Activated T-helper 1 cell treated with anti-CD3 and anti-CD28 coated beads, Interleukin-12 subunit alpha, Interleukin-12 subunit beta, Interleukin-2, Interleukin-4 antibody, amounts not matched to agents 30 ng/mL and 10 ng/mL and 1 ng/mL, durations not matched to agents 14 hours and 24 hours and 36 hours (primary cell): ENCODE measurements at regions of chr13 and their contacts with region 1.

Region 1: GRCh38 chr13:73715114-73715910 is 418.9 kb downstream of the KLF12 start:
- DNase-seq: peak; percentile 61
- H3K4me3 Mint-ChIP-seq: peak overlapping the region; percentile 55
- H3K27ac Mint-ChIP-seq: peak overlapping the region; percentile 81
- H3K4me1 Mint-ChIP-seq: peaks cover 47% of the 10 kb centered on the region
- H3K27me3 Mint-ChIP-seq: no peaks in the 10 kb centered on the region

Region 2: GRCh38 chr13:72781451-72782439 is 933.6 kb before region 1 on chr13 and contains the starts of genes DIS3 and PIBF1:
- intact Hi-C with region 1: loop called (anchors 2 kb)
- DNase-seq: peak; percentile 97
- H3K4me3 Mint-ChIP-seq: peak within 1 kb of the TSS; percentile 100
- H3K27ac Mint-ChIP-seq: peak within 1 kb of the TSS; percentile 100
- H3K4me1 Mint-ChIP-seq: peaks cover 65% of the 10 kb centered on the region
- H3K27me3 Mint-ChIP-seq: no peaks in the 10 kb centered on the region
- total RNA-seq, gene DIS3: 49.9 and 55.4 TPM in 2 replicates
- total RNA-seq, gene PIBF1: 20.9 and 21.2 TPM in 2 replicates

Region 3: GRCh38 chr13:73521290-73521624 is 194.1 kb before region 1 on chr13:
- intact Hi-C with region 1: loop called (anchors 2 kb)
- DNase-seq: peak; percentile 15
- H3K4me3 Mint-ChIP-seq: peak overlapping the region; percentile 65
- H3K27ac Mint-ChIP-seq: peak overlapping the region; percentile 71
- H3K4me1 Mint-ChIP-seq: peaks cover 22% of the 10 kb centered on the region
- H3K27me3 Mint-ChIP-seq: no peaks in the 10 kb centered on the region

Region 4: DNA sequence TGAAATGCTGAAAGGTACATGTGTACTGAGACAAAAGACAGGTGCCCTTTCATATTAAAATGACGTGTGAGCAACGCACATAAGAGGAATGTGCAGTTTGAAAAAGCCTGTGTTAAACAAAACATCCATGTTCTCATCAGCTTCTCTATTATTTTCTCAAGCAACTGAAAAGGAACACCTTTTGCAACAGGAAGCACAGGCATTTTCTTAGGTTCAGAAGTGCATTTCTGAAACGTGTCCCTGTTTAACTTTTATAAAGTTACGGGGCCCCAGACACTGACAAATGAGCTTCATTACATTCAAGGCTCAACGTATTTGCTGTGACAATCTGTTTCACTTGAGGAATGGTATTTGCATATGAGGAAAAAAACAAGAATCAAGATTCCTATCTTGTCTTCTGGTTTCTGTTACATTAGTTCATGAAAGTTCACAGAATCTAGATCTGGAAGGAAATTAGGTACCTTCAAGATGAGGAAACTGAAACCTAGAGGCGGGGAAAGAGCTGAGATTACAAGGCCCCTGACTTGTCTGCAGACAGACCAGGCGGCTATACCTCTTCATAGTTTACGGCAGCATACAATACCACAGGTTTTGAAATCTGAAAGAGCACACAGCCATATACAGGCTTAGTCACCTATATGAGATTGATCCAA is 12.8 kb before region 1 on chr13:
- intact Hi-C with region 1: loop called (anchors 1 kb)
- DNase-seq: peak; percentile 21
- H3K4me3 Mint-ChIP-seq: peak overlapping the region; percentile 50
- H3K27ac Mint-ChIP-seq: peak overlapping the region; percentile 65
- H3K4me1 Mint-ChIP-seq: peaks cover 27% of the 10 kb centered on the region
- H3K27me3 Mint-ChIP-seq: no peaks in the 10 kb centered on the region

Region 5: GRCh38 chr13:73924607-73925006 is 209.3 kb after region 1 on chr13:
- intact Hi-C with region 1: loop called (anchors 10 kb)
- DNase-seq: no peak
- H3K4me3 Mint-ChIP-seq: no peak overlapping the region
- H3K27ac Mint-ChIP-seq: no peak overlapping the region
- H3K4me1 Mint-ChIP-seq: peaks cover 25% of the 10 kb centered on the region
- H3K27me3 Mint-ChIP-seq: no peaks in the 10 kb centered on the region

Region 6: DNA sequence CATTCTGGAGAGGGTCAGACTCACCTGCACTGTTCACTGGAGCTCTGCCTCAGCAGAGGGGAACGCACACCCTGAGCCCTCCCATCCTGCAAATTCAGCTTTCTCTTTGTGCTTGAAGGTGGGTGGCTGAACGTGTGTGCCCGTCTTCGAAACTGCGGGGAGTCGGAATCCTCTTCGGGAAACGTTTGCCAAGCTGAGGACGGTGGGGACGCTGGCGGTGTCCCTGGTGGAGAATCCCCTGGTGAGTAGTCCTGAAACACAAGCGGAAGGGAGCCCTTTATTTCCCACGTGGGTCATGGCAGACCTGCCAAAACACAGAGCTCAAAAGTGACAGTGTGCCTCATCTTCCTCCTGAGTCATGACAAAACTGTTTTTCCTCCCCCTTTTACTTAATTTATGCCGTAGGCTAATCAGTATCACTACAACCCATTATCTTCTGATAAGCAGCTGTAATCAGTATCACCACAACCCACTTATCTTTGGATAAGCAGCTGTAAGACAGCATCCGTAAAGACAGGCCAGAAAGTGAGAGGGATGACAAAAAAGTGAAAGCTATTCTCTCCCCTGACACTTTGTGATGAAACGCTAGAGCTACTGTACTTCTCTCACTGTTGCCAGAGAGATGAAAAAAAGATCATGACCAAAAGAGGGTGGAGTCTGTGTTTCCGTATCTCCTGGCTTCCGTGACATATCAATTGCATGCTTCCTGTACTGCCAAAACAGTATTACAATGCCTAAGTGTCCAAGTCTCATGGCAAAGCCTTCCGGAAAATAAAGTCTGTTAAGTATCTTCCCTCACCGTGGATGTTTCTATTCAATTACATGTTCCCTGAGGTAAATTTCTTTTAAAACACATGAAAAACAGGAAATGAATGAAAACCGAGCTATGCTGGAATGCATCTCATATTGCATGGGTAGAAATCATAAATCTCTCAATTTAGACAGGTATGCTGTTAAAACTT is 1611.1 kb after region 1 on chr13:
- intact Hi-C with region 1: loop called (anchors 2 kb)
- DNase-seq: peak; percentile 46
- H3K4me3 Mint-ChIP-seq: peak overlapping the region; percentile 83
- H3K27ac Mint-ChIP-seq: peak overlapping the region; percentile 96
- H3K4me1 Mint-ChIP-seq: peaks cover 48% of the 10 kb centered on the region
- H3K27me3 Mint-ChIP-seq: no peaks in the 10 kb centered on the region